ENCODE measurements at regions of chr9 and their contacts with region 1.

Region 1: GRCh38 chr9:2727966-2728613 is 10.8 kb downstream of the KCNV2 start:
- DNase-seq: no peak
- H3K4me3 ChIP-seq: no peak overlapping the region
- H3K27ac ChIP-seq: no peak overlapping the region
- H3K4me1 ChIP-seq: no peaks in the 10 kb centered on the region
- H3K27me3 ChIP-seq: no peaks in the 10 kb centered on the region
- CTCF ChIP-seq: peak; percentile 28

Region 2: DNA sequence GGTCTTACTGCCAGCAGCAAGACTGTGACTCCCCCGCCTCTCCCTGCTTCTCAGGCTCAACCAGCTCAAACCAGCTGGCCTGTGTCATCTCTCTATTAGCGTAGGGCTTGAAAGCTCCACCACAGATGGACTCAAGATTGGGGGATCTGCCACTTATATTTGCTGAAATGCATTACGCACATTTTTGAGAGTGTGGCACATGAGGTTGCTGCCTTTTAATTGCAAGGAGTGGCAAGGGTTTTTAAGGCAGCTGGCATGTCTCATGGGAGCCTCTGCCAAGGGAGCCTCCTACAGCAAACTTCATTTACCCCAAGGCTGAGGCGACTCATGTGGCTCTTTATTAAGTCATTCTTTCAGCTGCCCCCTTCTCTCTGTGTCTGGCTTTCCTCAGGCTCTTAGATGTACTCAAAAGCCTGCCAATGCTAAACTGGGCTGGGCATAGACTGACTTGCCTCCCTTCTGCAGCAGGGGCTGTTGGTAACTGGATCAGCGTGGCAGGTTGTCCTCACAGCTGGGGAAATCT is 493.7 kb before region 1 on chr9:
- intact Hi-C with region 1: loop called (anchors 10 kb)
- DNase-seq: no peak
- H3K4me3 ChIP-seq: no peak overlapping the region
- H3K27ac ChIP-seq: no peak overlapping the region
- H3K4me1 ChIP-seq: no peaks in the 10 kb centered on the region
- H3K27me3 ChIP-seq: no peaks in the 10 kb centered on the region
- CTCF ChIP-seq: no peak

Region 3: GRCh38 chr9:2676466-2676865 is 51.6 kb before region 1 on chr9:
- intact Hi-C with region 1: no loop called
- DNase-seq: peak; percentile 26
- H3K4me3 ChIP-seq: no peak overlapping the region
- H3K27ac ChIP-seq: no peak overlapping the region
- H3K4me1 ChIP-seq: no peaks in the 10 kb centered on the region
- H3K27me3 ChIP-seq: no peaks in the 10 kb centered on the region
- CTCF ChIP-seq: no peak